ENCODE measurements at regions of chr4 and their contacts with region 1.

Region 1: DNA sequence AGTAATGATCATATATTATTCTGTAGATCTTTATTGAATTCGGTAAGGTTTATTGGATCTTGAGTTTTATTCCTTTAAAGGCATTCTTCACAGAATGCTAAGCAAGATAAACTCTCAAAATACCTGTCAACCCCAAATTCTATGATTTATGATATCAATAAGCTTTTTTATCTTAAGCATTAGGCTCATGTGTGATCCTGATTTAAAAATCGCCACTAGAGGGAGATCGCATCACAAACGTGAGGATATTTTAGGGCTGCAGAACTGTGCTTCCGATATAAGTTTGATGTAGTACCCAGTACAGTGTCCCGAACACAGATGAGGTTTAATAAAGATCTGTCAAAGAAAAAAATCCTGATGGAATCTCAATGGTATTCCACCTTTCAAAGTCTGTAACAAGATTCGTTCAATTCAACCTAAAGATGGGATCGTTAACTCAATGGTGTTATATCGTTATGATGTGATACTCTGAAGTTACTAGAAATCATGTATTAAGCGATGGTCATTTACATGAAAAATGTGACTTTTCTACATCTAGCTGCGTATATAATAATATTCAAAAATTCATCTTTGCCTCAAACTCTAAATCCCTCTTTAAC is 169.0 kb downstream of the CORIN start:
- DNase-seq: no peak

Region 2: GRCh38 chr4:47933840-47934239 is 264.9 kb after region 1 on chr4:
- intact Hi-C with region 1: loop called (anchors 5 kb)
- DNase-seq: no peak